Ascending aorta (tissue), 2 donors: ENCODE measurements at regions of chr12 and their contacts with region 1.

Region 1: DNA sequence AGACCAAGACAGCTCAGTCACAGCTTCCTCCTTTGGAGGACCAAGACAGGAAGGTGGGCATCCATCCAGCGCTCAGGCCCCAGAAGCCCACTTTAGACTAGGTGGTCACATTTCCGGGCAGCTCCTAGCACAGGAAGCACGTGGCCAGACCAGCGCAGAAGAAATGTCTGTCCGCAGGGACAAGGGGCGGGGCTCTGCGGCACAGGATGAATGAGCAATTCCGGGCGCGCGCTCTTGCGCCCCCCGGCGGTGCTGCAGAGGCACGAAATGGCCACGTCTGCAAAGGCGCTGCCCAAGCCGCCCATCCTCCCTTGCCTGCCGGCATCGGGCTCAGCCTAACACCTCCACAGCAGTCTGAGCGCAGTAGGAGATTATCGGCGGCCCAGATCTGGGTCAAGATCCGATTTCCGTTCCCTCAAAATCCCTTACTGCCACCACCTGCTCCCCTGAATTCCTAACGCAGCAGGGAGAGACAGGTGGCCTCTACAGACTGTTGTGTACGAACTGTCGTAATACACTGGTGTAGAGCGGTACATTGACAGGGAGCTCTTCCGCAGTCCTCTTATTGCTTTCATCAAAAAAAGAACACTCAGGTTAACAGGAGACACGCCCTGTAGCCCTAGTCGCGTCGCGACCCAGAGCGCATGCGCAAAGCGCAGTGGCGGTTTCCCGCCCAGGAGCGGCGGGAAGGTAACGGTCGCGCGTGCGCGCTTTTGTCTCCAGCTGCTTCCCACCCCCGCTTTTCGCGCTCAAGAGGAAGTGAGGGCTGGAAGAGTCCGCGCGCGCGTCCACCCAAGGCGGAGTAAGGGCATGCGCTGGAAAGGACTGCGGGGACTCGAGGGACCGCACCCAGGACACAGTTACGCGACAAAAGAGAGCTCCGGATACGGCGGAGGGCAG is 794 bp downstream of the TUBA1B start:
- DNase-seq: peak; percentile 83 to 97
- H3K4me3 ChIP-seq: peak overlapping the region; percentile 92
- H3K27ac ChIP-seq: peak overlapping the region; percentile 100
- H3K4me1 ChIP-seq: peaks cover 14 to 23% of the 10 kb centered on the region in 2 donors
- H3K27me3 ChIP-seq: no peaks in the 10 kb centered on the region
- CTCF ChIP-seq: peak; percentile 89 to 95 (median 93)

Region 2: DNA sequence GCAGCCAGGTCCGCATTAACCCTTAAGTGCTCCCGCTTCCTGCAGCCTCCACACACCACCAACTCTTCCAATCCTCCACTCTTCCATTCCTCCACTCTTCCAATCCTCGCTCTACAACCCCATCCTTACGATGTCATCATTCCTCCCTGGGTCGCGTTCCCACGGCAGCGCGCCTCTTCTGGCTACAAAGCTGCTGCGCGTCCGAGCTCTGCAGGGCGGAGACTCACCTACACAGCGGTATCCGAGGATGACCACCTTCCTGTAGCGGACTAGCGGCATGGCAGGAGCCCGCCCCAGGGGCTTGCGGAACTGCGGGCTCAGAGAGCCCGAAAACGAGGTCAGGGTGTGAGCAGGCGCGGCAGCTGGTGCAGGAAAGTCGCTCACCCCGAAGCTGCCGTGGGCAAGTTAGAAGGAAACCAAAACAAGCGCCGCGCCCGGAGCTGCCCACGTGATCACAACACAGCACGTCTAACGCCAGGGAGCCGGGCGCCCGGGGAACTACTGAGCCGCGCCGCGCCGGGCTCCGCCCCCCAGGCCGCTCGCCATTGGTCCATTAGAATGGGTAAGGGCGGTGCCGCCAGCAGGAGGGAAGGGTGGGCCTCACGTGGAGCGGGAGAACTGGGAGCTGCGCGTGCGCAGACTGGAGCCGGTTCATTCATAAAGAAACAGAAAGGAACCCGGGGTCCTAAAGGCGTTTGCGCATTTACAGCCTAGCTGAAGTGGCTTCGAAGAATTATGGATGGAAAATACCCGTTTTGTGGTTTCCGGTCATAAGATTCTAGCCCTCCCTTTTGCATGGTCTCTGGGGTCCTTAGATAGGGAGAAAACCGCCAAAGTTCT is 60.7 kb before region 1 on chr12 and contains the start of gene RHEBL1:
- intact Hi-C with region 1: loop called (anchors 2 kb)
- DNase-seq: peak; percentile 96 to 99
- H3K4me3 ChIP-seq: peak within 1 kb of the TSS; percentile 67 to 99
- H3K27ac ChIP-seq: peak within 1 kb of the TSS in 1 of 2 donors; percentile 61
- H3K4me1 ChIP-seq: peaks cover 8 to 10% of the 10 kb centered on the region in 2 donors
- H3K27me3 ChIP-seq: no peaks in the 10 kb centered on the region
- CTCF ChIP-seq: no peak
- total RNA-seq, gene RHEBL1: not detected

Region 3: GRCh38 chr12:49088190-49088931 is 42.0 kb before region 1 on chr12:
- intact Hi-C with region 1: loop called (anchors 2 kb)
- DNase-seq: peak; percentile 63 to 86
- H3K4me3 ChIP-seq: peak overlapping the region in 1 of 2 donors; percentile 22
- H3K27ac ChIP-seq: no peak overlapping the region
- H3K4me1 ChIP-seq: peaks cover 12 to 23% of the 10 kb centered on the region in 2 donors
- H3K27me3 ChIP-seq: peaks cover 3% of the 10 kb centered on the region
- CTCF ChIP-seq: peak; percentile 81 to 91 (median 88)

Region 4: GRCh38 chr12:49110464-49111155 is 19.8 kb before region 1 on chr12 and contains the start of gene LMBR1L:
- intact Hi-C with region 1: loop called (anchors 1 kb)
- DNase-seq: peak; percentile 90 to 100
- H3K4me3 ChIP-seq: peak within 1 kb of the TSS; percentile 69 to 73
- H3K27ac ChIP-seq: peak within 1 kb of the TSS; percentile 93 to 95
- H3K4me1 ChIP-seq: peaks cover 19 to 32% of the 10 kb centered on the region in 2 donors
- H3K27me3 ChIP-seq: no peaks in the 10 kb centered on the region
- CTCF ChIP-seq: peak; percentile 32 to 64 (median 50)
- total RNA-seq, gene LMBR1L: 74.2 TPM

Region 5: DNA sequence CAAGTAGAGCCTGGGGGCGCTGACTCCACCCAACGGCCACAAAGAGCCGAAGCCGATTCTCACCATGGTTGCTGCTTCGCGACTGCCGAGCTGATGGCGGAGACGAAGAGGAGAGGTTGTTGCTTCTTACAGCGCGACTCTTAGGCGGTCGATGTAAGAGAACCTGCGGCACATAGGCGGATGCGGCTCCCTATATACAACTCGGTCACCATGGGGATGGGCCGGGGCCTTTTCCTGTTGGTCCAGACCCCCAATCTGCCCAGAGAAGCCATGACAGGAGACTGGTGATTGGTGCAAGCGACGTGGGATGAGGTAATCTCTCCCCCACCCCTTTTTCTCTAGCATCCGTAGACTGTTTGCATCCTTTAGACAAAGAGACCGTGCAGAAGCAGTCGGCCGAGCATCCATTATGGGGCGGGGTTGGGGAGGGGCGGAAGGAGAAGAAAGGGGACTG is 58.5 kb after region 1 on chr12 and contains the start of gene TUBA1A:
- intact Hi-C with region 1: loop called (anchors 1 kb)
- DNase-seq: peak; percentile 95 to 98
- H3K4me3 ChIP-seq: peak within 1 kb of the TSS; percentile 91 to 97
- H3K27ac ChIP-seq: peak within 1 kb of the TSS; percentile 99 to 100
- H3K4me1 ChIP-seq: peaks cover 7 to 10% of the 10 kb centered on the region in 2 donors
- H3K27me3 ChIP-seq: no peaks in the 10 kb centered on the region
- CTCF ChIP-seq: no peak
- total RNA-seq, gene TUBA1A: 214 TPM

Region 6: DNA sequence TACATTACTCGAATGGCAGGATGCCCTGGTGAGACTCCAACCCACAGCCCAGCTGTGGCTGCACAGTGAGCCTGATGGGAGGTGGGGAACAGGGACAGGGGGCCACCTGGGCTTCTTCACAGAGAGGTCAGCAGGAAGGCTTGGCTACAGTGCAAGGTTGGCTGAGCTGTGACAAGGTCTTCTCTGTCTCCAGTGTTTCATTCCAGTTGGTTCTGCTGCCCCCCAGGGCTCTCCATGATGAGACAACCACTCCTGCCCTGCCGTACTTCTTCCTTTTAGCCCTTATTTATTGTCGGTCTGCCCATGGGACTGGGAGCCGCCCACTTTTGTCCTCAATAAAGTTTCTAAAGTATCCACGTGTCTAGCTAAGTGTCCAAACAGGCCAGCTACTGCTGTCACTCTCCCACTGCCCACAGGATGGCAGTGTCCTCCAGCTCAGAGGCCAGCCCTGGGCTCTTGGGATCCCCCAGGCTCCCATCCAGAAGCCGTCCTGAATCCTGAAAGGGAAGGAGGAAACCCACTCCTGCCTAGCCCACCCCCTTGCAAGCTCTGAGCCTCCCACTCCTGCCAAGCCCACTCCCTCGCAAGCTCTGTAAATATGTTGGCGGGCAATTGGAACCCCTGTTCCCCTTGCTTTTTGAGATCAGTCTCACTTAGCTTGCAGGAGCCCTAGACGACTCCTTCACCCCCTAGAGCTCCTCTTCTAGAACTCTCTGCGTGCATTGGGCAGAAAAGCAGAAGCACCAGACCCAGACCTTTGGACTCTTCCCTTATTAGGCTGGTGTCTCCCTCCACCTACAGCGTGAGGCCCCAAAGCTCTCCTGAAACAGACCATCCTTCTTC is 201.2 kb after region 1 on chr12:
- intact Hi-C with region 1: no loop called
- DNase-seq: peak in 1 of 2 donors; percentile 73
- H3K4me3 ChIP-seq: no peak overlapping the region
- H3K27ac ChIP-seq: no peak overlapping the region
- H3K4me1 ChIP-seq: no peaks in the 10 kb centered on the region
- H3K27me3 ChIP-seq: peaks cover 11% of the 10 kb centered on the region
- CTCF ChIP-seq: peak; percentile 60 to 73 (median 70)

Region 7: GRCh38 chr12:49740930-49741881 is 610.8 kb after region 1 on chr12 and contains the start of gene TMBIM6:
- intact Hi-C with region 1: loop called (anchors 5 kb)
- DNase-seq: peak; percentile 100
- H3K4me3 ChIP-seq: peak within 1 kb of the TSS; percentile 72
- H3K27ac ChIP-seq: peak within 1 kb of the TSS; percentile 97
- H3K4me1 ChIP-seq: peaks cover 5 to 21% of the 10 kb centered on the region in 2 donors
- H3K27me3 ChIP-seq: no peaks in the 10 kb centered on the region
- CTCF ChIP-seq: peak; percentile 86 to 94 (median 92)
- total RNA-seq, gene TMBIM6: 188 TPM